Mammary epithelial cell (primary cell): ENCODE measurements at regions of chr1 and their contacts with region 1.

Region 1: DNA sequence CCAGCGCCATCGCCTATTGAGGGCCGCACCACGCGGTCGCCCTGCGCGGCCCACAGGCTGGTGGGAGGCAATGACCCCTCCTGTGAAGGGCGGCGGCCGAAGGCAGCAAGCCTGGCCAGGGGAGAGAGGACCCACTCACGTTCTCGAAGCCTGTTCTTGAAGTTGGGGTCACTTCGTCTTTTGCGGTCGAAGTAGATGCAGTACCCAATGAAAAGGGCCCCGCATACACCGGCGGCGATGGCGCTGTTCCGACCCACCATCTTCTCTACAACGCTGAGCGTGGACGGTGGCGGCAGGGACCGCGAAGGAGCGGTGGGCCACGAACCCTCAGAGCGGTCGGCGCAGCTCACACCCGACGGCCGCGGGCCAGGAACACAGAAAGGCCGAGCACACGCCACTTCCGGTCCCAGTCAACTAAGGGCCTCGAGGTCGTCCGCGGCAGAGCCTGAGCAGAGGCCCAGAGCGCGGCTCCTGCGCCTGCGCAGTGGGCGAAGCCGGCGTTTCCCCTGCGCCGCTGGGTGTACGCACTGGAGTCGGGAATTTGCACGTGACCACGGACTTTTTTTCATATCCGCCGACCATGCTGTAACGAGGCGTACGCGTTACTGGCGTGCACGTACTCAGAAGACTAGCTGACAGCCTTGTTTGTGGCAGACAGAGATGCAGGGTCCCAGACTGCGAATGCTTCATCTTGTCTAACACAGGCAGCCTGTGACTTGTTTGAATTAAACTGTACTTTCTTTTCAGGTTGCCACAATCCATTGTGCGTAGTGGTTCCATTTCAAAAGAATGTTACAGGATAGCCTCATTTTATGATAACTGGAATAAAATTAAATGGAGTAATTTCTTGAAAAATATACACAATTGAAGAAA is at the start of gene TOMM20:
- DNase-seq: peak; percentile 97
- H3K4me3 ChIP-seq: peak within 1 kb of the TSS; percentile 75 to 98 (median 97)
- H3K27ac ChIP-seq: peak within 1 kb of the TSS; percentile 96
- H3K4me1 ChIP-seq: peaks cover 4% of the 10 kb centered on the region
- H3K27me3 ChIP-seq: no peaks in the 10 kb centered on the region
- CTCF ChIP-seq: no peak
- total RNA-seq, gene TOMM20: 96.5 to 102 TPM

Region 2: DNA sequence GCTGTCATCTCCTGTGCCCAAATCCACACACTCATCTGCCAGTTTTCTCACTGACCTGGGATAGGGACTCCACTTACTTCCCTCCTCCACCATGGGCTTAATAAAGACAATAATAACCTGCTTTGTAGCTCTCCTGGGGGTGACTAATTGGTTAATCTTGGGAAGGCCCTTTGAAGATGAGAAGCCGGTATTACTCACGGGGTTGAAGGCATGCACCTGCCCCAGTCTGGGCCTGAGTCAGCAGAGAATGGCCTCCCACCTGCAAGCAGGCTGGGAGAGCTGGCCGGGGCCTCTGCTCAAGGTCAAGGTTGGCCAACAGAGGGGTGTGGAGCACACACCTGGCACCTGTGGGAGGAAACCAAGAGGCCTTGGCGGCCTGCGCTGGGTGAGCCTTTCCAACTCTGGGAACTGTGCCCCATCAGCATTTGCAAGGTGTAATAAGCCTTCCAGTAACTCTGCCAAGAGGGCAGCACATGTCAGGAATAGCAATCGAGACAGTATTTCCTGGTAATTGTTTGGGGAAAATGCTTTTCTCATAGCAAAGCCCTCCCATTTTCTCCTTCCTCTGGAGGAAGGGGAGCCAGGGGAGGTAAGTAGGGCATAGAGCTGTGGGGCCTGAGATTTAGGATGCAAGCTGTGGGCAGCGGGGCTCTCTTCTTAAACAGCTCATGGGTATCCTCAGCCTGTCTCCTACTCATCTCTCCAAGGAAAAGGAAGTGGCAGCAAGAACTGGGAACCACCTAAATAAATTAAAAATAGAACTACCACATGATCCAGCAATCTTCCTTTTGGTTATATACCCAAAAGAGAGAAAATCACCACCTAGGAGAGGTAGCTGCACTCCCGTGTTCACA is 49.0 kb before region 1 on chr1:
- CTCF ChIA-PET with region 1: no interaction called
- dilution Hi-C with region 1: no loop called
- in situ Hi-C with region 1: no loop called
- intact Hi-C with region 1: no loop called
- DNase-seq: peak; percentile 99
- H3K4me3 ChIP-seq: no peak overlapping the region
- H3K27ac ChIP-seq: peak overlapping the region; percentile 60
- H3K4me1 ChIP-seq: peaks cover 46% of the 10 kb centered on the region
- H3K27me3 ChIP-seq: no peaks in the 10 kb centered on the region
- CTCF ChIP-seq: no peak

Region 3: DNA sequence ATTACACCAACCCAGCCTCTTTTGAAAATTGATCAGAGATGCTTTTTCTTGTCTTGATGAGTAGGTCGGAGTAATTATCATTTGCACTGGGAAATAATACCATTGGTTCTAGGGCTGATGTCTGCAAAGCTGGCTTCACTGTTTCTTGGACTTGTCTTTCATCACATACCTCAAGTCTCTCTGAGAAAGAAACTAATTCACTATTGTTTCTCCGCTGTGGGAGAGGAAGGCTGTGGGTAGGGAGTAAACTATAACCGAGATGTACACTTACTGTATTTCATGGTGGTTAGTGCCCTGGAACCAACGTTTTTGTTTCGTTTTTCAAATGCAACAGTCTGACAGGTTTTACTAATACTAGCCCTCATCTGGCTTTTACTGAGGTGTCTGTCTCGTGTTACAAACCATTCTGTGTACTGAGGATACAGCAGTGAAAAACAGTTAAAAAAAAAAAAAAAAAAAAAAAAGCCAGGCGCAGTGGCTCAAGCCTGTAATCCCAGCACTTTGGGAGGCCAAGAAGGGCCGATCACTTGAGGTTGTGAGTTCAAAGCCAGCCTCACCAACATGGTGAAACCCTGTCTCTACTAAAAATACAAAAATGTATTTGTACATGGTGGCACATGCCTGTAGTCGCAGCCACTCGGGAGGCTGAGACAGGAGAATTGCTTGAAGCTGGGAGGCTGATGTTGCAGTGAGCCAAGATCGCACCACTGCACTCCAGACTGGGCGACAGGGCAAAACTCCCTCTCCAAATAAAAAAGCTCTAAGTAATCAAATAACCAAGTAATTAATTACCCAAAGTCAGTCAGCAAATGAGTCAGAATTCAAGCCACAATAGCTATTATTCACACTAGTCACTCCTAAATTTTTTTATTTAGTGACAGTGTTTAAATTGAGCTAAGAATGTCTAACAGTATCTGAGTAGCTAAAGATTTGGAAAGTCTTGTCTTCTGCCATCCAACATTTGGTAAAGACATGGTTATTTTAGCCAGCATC is 23.3 kb before region 1 on chr1:
- CTCF ChIA-PET with region 1: no interaction called
- dilution Hi-C with region 1: no loop called
- in situ Hi-C with region 1: no loop called
- intact Hi-C with region 1: loop called (anchors 1 kb)
- DNase-seq: no peak
- H3K4me3 ChIP-seq: peak overlapping the region in 1 of 3 experiments; percentile 25
- H3K27ac ChIP-seq: no peak overlapping the region
- H3K4me1 ChIP-seq: peaks cover 17% of the 10 kb centered on the region
- H3K27me3 ChIP-seq: no peaks in the 10 kb centered on the region
- CTCF ChIP-seq: no peak

Region 4: GRCh38 chr1:235160957-235161684 is 32.4 kb after region 1 on chr1 and contains the start of gene RBM34:
- CTCF ChIA-PET with region 1: no interaction called
- dilution Hi-C with region 1: no loop called
- in situ Hi-C with region 1: no loop called
- intact Hi-C with region 1: loop called (anchors 2 kb)
- DNase-seq: peak; percentile 90
- H3K4me3 ChIP-seq: peak within 1 kb of the TSS; percentile 76 to 94 (median 81)
- H3K27ac ChIP-seq: peak within 1 kb of the TSS; percentile 90
- H3K4me1 ChIP-seq: peaks cover 12% of the 10 kb centered on the region
- H3K27me3 ChIP-seq: no peaks in the 10 kb centered on the region
- CTCF ChIP-seq: peak in 1 of 2 donors; percentile 28
- total RNA-seq, gene RBM34: 44.8 to 96.2 TPM